Astrocyte of the spinal cord (primary cell): ENCODE measurements at regions of chr6 and their contacts with region 1.

Region 1: GRCh38 chr6:110958329-110959192 is at the start of gene GTF3C6:
- DNase-seq: peak; percentile 95
- H3K4me3 ChIP-seq: peak within 1 kb of the TSS; percentile 71
- CTCF ChIP-seq: no peak

Region 2: DNA sequence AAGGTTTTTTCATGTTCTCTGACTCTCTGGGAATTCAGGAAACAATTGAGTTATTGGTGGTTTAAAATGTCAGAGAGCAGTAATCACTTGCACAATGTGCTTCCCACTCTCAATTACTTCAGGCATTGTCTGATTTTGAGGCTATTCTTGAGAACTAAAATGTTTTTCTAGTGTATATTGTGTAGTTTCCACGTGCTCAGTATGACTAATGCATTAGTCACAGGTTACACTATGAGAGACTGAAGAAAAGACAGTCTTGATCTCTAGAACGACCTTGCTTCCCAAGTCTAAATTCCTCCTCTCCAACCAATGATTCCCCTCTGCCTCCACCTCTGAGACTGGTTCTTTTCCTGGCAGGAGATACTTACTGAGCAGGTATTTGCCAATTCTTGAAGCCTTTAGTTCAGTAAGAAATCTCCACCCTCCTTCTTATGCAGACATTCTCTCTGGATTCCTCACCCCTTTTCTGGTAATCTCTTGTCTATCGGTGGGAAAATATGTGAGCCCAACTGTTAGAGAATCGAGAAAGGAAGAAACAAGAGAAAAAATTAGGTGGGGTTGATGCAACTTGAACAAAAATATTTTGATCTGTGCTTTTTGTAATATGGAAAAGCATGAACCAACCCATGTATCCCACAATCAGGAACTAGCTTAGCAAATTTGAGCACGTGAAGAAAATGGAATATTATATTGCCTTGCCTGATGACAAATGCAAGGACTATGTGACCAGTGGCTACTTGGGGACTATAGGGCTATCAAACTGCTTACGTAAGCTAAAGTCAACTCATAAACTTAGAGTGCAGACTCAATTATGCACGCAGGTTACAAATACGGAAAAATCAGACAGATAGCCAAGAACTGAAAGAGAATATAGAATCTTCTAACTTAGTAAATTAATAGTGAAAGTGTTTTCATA is 421.1 kb before region 1 on chr6:
- in situ Hi-C with region 1: loop called (anchors 10 kb)
- DNase-seq: peak; percentile 96
- H3K4me3 ChIP-seq: no peak overlapping the region
- CTCF ChIP-seq: no peak

Region 3: DNA sequence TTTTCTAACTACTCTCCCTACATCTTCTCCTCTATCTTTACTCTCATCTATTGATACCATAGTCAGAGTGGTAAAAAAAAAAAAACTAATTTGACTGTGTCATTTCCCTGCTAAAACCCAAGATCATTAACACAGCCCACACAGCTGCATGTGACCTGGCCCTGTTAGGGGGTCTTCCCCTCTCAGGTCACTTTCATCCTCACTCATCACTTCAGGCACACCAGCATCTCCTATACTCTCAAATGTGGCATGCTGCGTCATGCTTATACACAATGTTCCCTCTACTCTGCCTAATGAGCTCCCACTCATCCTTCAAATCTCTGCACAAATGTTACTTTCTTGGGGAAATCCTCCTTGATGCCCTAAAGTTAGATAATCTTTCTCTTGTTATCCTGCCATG is 230.1 kb before region 1 on chr6:
- in situ Hi-C with region 1: no loop called
- DNase-seq: no peak
- H3K4me3 ChIP-seq: no peak overlapping the region
- CTCF ChIP-seq: no peak